ENCODE measurements at regions of chr5 and their contacts with region 1.

Region 1: GRCh38 chr5:119411935-119412602 is 40.2 kb upstream of the HSD17B4 start:
- DNase-seq: peak; percentile 64 to 73 (median 69)
- H3K4me3 ChIP-seq: peak overlapping the region; percentile 33 to 39
- H3K4me3 Mint-ChIP-seq: peak overlapping the region; percentile 79 to 91 (median 83)
- H3K27ac ChIP-seq: no peak overlapping the region
- H3K27ac Mint-ChIP-seq: peak overlapping the region in 6 of 7 donors; percentile 43 to 88 (median 58)
- H3K4me1 ChIP-seq: peaks cover 7% of the 10 kb centered on the region
- H3K4me1 Mint-ChIP-seq: peaks cover 12 to 24% (median 15%) of the 10 kb centered on the region in 4 donors
- H3K27me3 ChIP-seq: no peaks in the 10 kb centered on the region
- H3K27me3 Mint-ChIP-seq: peaks cover 4 to 5% of the 10 kb centered on the region in 2 donors

Region 2: DNA sequence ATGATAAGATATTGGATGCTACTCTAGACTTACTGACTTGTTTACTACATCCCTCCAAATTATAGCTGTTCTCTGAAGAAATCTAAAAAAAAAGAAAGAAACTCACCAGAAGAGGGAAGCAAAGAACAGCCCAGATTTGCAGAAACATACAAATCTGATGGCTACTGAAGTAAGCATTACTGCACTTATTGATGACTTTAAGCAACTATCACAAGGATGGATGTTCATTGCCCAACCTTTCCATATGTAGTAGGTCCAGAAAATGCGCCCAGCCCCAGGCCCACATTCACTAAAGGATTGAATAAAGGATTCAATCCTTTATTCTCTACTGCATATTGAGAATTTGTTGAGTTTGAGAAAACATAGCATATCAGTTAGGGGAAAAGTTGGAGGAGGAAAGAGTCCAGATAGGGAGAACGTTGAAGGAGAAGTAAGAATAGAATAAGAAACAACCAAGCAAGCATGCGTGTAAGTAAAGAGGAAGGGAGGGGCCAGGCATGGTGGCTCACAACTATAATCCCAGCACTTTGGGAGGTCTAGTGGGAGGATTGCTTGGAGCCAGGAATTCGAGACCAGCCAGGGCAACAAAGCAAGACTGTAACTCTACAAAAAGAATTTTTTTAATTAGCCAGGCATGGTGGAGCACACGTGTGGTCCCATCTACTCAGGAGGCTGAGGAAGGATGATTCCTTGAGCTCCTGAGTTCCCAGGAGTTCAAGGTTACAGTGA is 389.9 kb before region 1 on chr5:
- CTCF ChIA-PET with region 1: interaction called, 53 read pairs
- POLR2A ChIA-PET with region 1: no interaction called
- intact Hi-C with region 1: loop called (anchors 1 kb)
- DNase-seq: peak in 4 of 5 donors; percentile 42 to 47 (median 46)
- H3K4me3 ChIP-seq: no peak overlapping the region
- H3K4me3 Mint-ChIP-seq: no peak overlapping the region
- H3K27ac ChIP-seq: no peak overlapping the region
- H3K27ac Mint-ChIP-seq: peak overlapping the region in 1 of 7 donors; percentile 65
- H3K4me1 ChIP-seq: no peaks in the 10 kb centered on the region
- H3K4me1 Mint-ChIP-seq: no peaks in the 10 kb centered on the region
- H3K27me3 ChIP-seq: no peaks in the 10 kb centered on the region
- H3K27me3 Mint-ChIP-seq: no peaks in the 10 kb centered on the region

Region 3: GRCh38 chr5:119302916-119303897 is 108.9 kb before region 1 on chr5:
- CTCF ChIA-PET with region 1: interaction called, 10 read pairs
- POLR2A ChIA-PET with region 1: interaction called, 5 read pairs
- intact Hi-C with region 1: no loop called
- DNase-seq: no peak
- H3K4me3 ChIP-seq: peak overlapping the region; percentile 13 to 17
- H3K4me3 Mint-ChIP-seq: peak overlapping the region; percentile 17 to 96 (median 74)
- H3K27ac ChIP-seq: peak overlapping the region; percentile 43
- H3K27ac Mint-ChIP-seq: peak overlapping the region; percentile 80 to 99 (median 94)
- H3K4me1 ChIP-seq: peaks cover 83% of the 10 kb centered on the region
- H3K4me1 Mint-ChIP-seq: peaks cover 64 to 97% (median 79%) of the 10 kb centered on the region in 4 donors
- H3K27me3 ChIP-seq: no peaks in the 10 kb centered on the region
- H3K27me3 Mint-ChIP-seq: no peaks in the 10 kb centered on the region

Region 4: GRCh38 chr5:119355685-119356611 is 56.1 kb before region 1 on chr5 and contains the start of gene TNFAIP8:
- CTCF ChIA-PET with region 1: interaction called, 23 read pairs
- POLR2A ChIA-PET with region 1: no interaction called
- intact Hi-C with region 1: no loop called
- DNase-seq: peak in 2 of 5 donors; percentile 12 to 75
- H3K4me3 ChIP-seq: peak within 1 kb of the TSS; percentile 51 to 55
- H3K4me3 Mint-ChIP-seq: peak within 1 kb of the TSS; percentile 82 to 97 (median 90)
- H3K27ac ChIP-seq: peak within 1 kb of the TSS; percentile 78
- H3K27ac Mint-ChIP-seq: peak within 1 kb of the TSS; percentile 86 to 97 (median 93)
- H3K4me1 ChIP-seq: peaks cover 93% of the 10 kb centered on the region
- H3K4me1 Mint-ChIP-seq: peaks cover 75 to 95% (median 86%) of the 10 kb centered on the region in 4 donors
- H3K27me3 ChIP-seq: no peaks in the 10 kb centered on the region
- H3K27me3 Mint-ChIP-seq: no peaks in the 10 kb centered on the region
- total RNA-seq, gene TNFAIP8: 167 to 176 TPM

Region 5: GRCh38 chr5:119367502-119368237 is 44.4 kb before region 1 on chr5:
- CTCF ChIA-PET with region 1: interaction called, 25 read pairs
- POLR2A ChIA-PET with region 1: no interaction called
- intact Hi-C with region 1: no loop called
- DNase-seq: peak in 1 of 5 donors; percentile 71
- H3K4me3 ChIP-seq: peak overlapping the region in 1 of 2 donors; percentile 28
- H3K4me3 Mint-ChIP-seq: peak overlapping the region in 7 of 8 donors; percentile 61 to 83 (median 68)
- H3K27ac ChIP-seq: peak overlapping the region; percentile 62
- H3K27ac Mint-ChIP-seq: peak overlapping the region; percentile 85 to 91 (median 88)
- H3K4me1 ChIP-seq: peaks cover 87% of the 10 kb centered on the region
- H3K4me1 Mint-ChIP-seq: peaks cover 70 to 87% (median 79%) of the 10 kb centered on the region in 4 donors
- H3K27me3 ChIP-seq: no peaks in the 10 kb centered on the region
- H3K27me3 Mint-ChIP-seq: no peaks in the 10 kb centered on the region

Region 6: DNA sequence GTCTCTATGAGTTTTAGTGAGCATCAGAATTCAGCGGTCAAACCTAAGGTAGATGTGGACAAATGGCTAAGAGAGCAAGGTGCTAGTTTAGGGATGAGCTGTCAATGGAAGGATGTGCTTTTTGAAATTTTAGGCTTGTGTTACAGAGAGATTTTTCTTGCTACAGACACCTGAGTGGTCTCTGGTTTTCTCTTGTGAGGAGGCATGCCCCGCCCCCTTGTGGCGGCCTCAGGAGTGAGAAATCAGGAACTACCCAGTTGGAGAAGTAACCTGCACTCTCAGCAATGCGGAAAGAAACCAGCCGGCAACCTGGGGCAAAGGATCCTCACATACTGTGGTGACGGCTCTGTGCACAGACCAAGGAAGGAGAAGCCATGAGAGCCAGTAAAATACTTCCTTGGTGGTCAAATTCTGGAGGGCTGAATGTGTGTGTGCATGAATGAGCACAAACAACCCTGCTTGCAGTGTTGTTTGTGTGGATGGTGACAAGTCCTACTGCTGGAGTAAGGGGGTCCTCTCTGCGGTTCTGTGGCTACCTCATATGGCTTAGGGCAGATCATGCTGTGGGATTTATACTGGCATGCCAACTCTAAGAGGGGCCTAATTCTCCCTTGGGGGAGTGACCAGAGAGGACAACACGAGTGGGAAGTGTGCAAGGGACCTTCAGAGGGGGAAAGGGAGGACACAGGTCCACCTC is 23.5 kb after region 1 on chr5:
- CTCF ChIA-PET with region 1: interaction called, 33 read pairs
- POLR2A ChIA-PET with region 1: no interaction called
- intact Hi-C with region 1: no loop called
- DNase-seq: peak; percentile 61 to 73 (median 64)
- H3K4me3 ChIP-seq: no peak overlapping the region
- H3K4me3 Mint-ChIP-seq: peak overlapping the region in 1 of 8 donors; percentile 18
- H3K27ac ChIP-seq: no peak overlapping the region
- H3K27ac Mint-ChIP-seq: no peak overlapping the region
- H3K4me1 ChIP-seq: no peaks in the 10 kb centered on the region
- H3K4me1 Mint-ChIP-seq: peaks cover 3 to 8% (median 8%) of the 10 kb centered on the region in 4 donors
- H3K27me3 ChIP-seq: no peaks in the 10 kb centered on the region
- H3K27me3 Mint-ChIP-seq: peaks cover 25 to 37% of the 10 kb centered on the region in 2 donors